Panc1 (cell line): ENCODE measurements at regions of chr3 and their contacts with region 1.

Region 1: DNA sequence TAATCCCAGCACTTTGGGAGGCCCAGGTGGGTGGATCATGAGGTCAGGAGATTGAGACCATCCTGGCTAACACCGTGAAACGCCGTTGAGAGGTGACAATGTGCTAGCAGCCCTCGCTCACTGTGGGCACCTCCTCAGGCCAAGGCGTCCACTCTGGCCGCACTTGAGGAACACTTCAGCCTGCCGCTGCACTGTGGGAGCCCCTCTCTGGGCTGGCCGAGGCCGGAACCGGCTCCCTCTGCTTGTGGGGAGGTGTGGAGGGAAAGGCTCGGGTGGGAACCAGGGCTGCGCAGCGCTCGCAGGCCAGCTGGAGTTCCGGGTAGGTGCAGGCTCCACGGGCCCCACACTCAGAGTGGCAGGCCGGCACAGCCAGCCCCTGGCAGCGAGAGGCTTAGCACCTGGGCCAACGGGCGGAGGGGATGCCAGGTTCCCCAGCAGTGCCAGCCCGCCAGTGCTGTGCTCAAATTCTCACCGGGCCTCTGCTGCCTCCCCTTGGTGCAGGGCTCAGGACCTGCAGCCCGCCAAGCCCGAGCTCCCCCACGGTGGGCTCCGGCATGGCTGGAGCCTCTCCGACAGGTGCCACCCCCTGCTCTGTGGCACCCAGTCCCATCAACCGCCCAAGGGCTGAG is 253.6 kb downstream of the CNTN4 start:
- DNase-seq: no peak
- ATAC-seq: no peak
- H3K4me3 ChIP-seq: no peak overlapping the region
- H3K27ac ChIP-seq: no peak overlapping the region
- H3K4me1 ChIP-seq: no peaks in the 10 kb centered on the region
- H3K27me3 ChIP-seq: no peaks in the 10 kb centered on the region
- CTCF ChIP-seq: no peak

Region 2: DNA sequence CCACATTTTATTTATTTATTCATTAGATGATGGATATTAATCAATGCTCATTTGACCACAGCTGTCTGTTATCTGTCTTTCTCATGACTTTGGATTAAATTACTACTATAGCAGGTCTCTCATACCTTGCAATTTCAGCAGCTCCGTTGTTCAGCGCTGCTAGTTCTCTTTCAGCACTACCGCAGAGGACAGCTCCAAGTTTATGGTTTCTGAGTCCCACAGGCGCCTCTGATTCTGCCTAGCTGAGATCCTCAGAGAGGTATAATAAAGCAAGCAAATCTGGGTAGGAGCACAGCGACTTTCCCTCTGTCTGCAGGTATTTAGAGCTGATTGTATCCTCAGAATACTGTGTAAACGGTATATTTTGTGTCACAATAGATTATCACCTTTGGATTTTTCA is 48.7 kb before region 1 on chr3:
- CTCF ChIA-PET with region 1: no interaction called
- POLR2A ChIA-PET with region 1: no interaction called
- in situ Hi-C with region 1: no loop called
- intact Hi-C with region 1: no loop called
- DNase-seq: no peak
- ATAC-seq: no peak
- H3K4me3 ChIP-seq: no peak overlapping the region
- H3K27ac ChIP-seq: no peak overlapping the region
- H3K4me1 ChIP-seq: no peaks in the 10 kb centered on the region
- H3K27me3 ChIP-seq: no peaks in the 10 kb centered on the region
- CTCF ChIP-seq: no peak

Region 3: GRCh38 chr3:2420919-2421318 is 68.7 kb after region 1 on chr3:
- CTCF ChIA-PET with region 1: no interaction called
- POLR2A ChIA-PET with region 1: interaction called, 10 read pairs
- in situ Hi-C with region 1: no loop called
- intact Hi-C with region 1: no loop called
- DNase-seq: no peak
- ATAC-seq: no peak
- H3K4me3 ChIP-seq: no peak overlapping the region
- H3K27ac ChIP-seq: no peak overlapping the region
- H3K4me1 ChIP-seq: no peaks in the 10 kb centered on the region
- H3K27me3 ChIP-seq: no peaks in the 10 kb centered on the region
- CTCF ChIP-seq: no peak